ENCODE measurements at regions of chr1 and their contacts with region 1.

Region 1: DNA sequence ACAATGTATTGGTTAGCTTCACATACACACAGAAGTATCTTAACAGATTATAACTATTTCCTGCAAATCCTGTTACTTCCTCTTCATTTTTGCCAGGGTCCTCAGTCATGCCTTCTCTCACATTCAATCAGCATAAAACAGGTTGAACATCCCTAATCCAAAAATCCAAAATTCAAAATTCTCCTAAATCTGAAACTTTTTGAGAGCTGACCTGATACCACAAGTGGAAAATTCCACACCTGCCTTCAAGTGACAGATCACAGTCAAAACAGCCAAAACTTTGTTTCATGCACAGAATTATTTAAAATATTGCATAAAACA is 62.9 kb upstream of the FBXO28 start:
- DNase-seq: no peak
- ATAC-seq: no peak
- H3K4me3 ChIP-seq: no peak overlapping the region
- H3K27ac ChIP-seq: no peak overlapping the region
- H3K4me1 ChIP-seq: peaks cover 0 to 4% of the 10 kb centered on the region in 2 donors
- H3K27me3 ChIP-seq: no peaks in the 10 kb centered on the region
- CTCF ChIP-seq: no peak
- POLR2A ChIP-seq: no peak

Region 2: DNA sequence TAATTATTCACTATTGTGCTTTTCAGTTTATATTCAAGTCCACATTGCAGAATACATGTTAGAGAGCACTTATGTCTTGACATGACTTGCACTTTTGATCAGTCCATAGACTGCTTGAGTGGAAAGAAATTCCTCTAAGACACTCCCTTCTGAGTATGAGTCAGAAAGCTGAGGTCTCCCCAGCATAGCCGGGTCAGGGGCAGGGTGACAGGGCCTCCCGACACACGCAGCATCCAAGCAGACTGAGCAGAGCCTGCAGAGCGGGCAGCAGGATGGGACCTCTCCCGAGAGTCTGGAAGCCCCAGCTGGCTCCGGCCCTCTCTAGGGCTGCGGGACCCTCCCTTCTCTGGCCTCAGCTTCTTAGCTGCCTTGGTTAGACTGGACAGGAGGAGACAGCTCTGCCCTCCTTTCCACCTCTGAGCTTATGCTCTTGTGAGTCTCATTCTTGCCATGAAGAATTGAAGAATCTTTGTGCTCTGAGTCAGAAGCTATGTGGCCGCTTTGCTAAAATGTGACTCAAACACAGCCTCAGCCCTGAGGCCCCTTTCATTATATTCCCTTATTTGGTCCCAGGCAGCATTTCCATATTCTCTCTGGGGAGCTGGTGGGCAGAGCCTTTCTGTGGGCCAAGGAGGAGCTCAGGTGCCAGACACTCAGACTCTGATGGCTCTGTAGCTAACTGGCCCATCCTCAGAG is 350.0 kb before region 1 on chr1:
- in situ Hi-C with region 1: no loop called
- intact Hi-C with region 1: loop called (anchors 2 kb)
- DNase-seq: no peak
- ATAC-seq: peak in 1 of 2 donors; percentile 16
- H3K4me3 ChIP-seq: no peak overlapping the region
- H3K27ac ChIP-seq: peak overlapping the region in 3 of 4 donors; percentile 39 to 53 (median 50)
- H3K4me1 ChIP-seq: no peaks in the 10 kb centered on the region
- H3K27me3 ChIP-seq: no peaks in the 10 kb centered on the region
- CTCF ChIP-seq: no peak
- POLR2A ChIP-seq: no peak

Measured in gastrocnemius medialis (tissue), 4 donors.